Activated CD4-positive, alpha-beta memory T cell treated with anti-CD3 and anti-CD28 coated beads for 36 hours (primary cell): ENCODE measurements at regions of chr6 and their contacts with region 1.

Region 1: DNA sequence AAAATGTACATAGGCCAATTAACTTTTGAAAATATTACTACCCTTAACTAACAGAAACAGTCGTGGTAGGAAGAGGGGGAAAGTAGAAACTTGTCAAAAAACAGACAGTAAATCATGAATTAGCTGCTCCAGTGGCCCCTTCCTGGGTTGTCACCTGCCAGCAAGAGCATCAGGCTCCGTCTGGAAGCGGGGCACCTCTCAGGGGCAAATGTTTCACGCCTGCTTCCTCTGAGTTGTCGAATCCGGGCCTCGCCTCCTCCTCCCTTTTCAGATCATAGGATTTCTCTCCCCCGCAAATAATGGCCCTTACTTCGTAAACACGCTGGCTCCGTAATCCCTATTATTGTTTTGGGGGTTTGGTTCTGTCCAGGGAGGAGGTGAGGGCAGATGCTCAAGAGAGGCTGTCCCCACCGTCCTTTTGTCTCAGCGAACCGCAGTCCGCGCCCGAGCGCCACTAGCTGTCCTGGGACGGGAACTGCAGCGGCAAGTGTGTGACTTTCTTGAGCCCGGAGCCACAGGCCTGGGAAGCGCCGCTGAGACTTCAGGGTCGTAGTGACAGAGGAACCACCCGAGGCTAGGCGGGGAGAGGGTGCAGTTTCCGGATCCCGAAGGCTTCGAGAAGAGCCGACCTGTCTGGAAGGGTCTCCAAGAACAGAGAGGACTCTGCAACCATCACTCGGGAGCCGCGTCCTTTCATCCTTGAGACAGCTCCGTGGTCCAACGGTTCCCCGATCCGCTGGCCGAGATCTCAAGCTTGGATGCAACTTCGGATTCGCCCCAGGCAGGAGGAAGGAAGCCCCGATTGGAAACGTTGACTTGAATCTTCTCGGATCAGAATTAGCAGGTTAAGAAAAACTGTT is 214.5 kb upstream of the ZNF184 start:
- DNase-seq: peak; percentile 90
- H3K4me3 Mint-ChIP-seq: peak overlapping the region; percentile 87
- H3K27ac Mint-ChIP-seq: peak overlapping the region; percentile 84
- H3K4me1 Mint-ChIP-seq: peaks cover 14% of the 10 kb centered on the region
- H3K27me3 Mint-ChIP-seq: peaks cover 15% of the 10 kb centered on the region

Region 2: DNA sequence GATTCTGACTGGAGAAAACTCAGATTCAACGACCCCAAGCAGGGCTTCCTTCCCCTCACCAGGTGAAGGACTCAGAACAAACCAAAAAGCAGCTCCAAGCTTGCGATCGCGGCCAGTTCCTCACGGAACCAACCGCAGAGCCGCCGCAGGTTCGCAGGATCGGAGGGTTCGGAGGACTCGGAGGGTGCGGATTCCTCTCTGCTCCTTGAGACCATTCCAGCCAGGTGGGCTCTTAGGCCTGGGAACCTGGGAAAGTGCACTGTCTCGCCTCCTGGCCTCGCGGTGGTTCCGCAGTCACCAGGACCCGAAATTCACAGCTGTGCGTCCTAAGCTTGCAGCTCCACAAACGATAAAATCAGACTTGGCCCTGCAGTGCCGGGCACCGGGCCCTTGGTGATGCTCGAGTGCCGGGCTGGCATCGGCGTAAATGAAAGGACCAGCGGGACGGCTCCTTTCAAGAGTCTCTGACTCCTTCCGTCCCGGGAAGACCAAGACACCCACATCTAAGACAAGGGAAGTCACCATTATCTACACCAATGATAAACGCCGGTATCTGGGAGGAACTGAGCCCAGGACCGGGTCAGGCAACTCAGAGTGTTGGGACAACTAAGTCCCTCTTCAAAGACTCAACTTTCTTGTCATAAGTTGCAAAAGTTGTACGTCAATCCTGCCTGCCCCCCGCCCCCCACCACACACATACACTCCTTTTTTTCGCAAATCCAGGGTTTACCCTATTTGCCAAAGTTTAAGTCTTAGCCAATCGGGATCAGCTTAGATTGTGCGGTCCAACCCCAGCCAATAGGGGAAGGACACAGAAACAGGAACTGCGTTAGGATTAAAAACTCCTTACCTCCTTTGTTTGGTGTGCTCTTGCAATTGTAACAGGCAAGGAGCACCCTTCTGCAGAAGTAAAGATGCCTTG is 509.6 kb before region 1 on chr6:
- CTCF ChIA-PET with region 1: interaction called, 3 read pairs
- POLR2A ChIA-PET with region 1: no interaction called
- intact Hi-C with region 1: loop called (anchors 5 kb)
- DNase-seq: peak; percentile 84
- H3K4me3 Mint-ChIP-seq: peak overlapping the region; percentile 88
- H3K27ac Mint-ChIP-seq: peak overlapping the region; percentile 88
- H3K4me1 Mint-ChIP-seq: peaks cover 10% of the 10 kb centered on the region
- H3K27me3 Mint-ChIP-seq: peaks cover 1% of the 10 kb centered on the region

Region 3: DNA sequence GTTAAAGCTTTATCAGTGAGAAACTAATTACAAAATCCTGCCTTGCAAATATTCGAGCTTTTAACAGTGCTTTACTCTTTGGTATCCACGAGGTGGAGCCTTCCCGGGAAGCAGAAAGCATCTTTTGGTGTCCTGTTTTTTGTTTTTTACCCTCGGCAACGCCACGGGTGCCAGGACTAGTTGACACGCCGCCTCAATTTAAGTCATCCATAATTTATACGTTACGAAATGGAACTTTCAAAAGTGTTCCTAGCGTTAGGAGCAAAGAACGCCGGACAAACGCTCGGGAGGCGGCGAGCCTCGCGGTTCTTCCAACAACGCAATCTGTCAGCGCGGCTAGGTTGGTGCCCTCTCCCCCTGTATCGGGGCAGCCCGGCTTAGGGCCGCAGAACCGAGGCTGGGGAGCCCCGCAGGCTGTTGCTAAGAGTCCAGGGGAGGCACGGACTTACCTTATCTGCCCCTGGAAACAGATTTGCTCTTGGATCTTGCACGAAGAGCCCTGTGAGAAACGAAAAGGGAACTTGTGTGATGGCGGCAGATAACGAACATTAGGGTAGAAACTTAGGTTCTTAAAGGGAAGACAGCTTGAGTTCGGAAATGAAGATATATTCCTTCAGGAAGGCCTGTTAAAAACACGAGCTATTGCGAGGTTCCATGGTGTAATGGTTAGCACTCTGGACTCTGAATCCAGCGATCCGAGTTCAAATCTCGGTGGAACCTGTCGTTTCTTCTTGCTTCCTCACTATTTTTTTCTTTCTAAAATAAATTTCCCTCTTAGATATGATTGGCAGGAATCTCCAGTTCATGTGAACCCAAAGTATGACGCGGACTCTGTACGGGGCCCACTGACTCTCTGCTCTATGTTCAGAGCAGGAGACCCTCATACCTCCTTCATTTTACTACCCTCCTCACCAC is 168.2 kb before region 1 on chr6:
- CTCF ChIA-PET with region 1: interaction called, 4 read pairs
- POLR2A ChIA-PET with region 1: no interaction called
- intact Hi-C with region 1: loop called (anchors 2 kb)
- DNase-seq: peak; percentile 70
- H3K4me3 Mint-ChIP-seq: peak overlapping the region; percentile 79
- H3K27ac Mint-ChIP-seq: peak overlapping the region; percentile 77
- H3K4me1 Mint-ChIP-seq: peaks cover 19% of the 10 kb centered on the region
- H3K27me3 Mint-ChIP-seq: peaks cover 17% of the 10 kb centered on the region

Region 4: DNA sequence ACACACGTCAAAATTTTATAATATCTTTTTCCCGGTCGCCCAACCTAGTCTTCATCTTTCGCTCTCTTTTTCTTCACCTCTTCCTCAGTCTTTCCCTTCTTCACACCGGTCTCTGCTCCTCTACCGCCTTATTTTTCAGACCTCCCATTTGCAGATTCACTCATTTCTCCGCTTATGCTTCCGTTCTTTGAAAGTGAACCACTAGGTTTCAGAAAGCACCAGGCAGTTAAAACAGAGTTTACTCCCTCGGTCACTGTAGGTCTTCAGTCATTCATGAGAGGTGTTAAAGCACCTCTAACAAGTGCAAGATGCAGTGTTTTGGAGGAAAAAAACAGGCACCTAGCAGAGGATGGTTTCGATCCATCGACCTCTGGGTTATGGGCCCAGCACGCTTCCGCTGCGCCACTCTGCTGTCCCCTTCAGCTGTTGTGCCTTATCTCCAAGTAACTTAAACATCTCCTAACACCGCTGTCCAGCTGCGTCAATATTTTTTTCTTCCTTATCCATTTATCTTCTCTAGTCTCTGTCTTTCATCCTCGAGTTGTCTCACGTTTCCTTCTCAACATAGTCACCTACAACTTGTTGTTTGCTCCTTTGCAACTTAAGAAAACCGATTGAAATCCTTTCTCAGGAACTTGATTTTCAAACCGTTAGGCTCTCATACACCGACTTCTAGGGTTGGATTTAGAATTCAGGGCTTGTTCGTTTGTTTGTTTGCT is 94.7 kb before region 1 on chr6:
- CTCF ChIA-PET with region 1: no interaction called
- POLR2A ChIA-PET with region 1: no interaction called
- intact Hi-C with region 1: loop called (anchors 5 kb)
- DNase-seq: peak; percentile 71
- H3K4me3 Mint-ChIP-seq: no peak overlapping the region
- H3K27ac Mint-ChIP-seq: no peak overlapping the region
- H3K4me1 Mint-ChIP-seq: no peaks in the 10 kb centered on the region
- H3K27me3 Mint-ChIP-seq: peaks cover 25% of the 10 kb centered on the region

Region 5: GRCh38 chr6:27604986-27605385 is 82.4 kb before region 1 on chr6:
- CTCF ChIA-PET with region 1: no interaction called
- POLR2A ChIA-PET with region 1: no interaction called
- intact Hi-C with region 1: no loop called
- DNase-seq: no peak
- H3K4me3 Mint-ChIP-seq: no peak overlapping the region
- H3K27ac Mint-ChIP-seq: no peak overlapping the region
- H3K4me1 Mint-ChIP-seq: peaks cover 25% of the 10 kb centered on the region
- H3K27me3 Mint-ChIP-seq: peaks cover 46% of the 10 kb centered on the region

Region 6: DNA sequence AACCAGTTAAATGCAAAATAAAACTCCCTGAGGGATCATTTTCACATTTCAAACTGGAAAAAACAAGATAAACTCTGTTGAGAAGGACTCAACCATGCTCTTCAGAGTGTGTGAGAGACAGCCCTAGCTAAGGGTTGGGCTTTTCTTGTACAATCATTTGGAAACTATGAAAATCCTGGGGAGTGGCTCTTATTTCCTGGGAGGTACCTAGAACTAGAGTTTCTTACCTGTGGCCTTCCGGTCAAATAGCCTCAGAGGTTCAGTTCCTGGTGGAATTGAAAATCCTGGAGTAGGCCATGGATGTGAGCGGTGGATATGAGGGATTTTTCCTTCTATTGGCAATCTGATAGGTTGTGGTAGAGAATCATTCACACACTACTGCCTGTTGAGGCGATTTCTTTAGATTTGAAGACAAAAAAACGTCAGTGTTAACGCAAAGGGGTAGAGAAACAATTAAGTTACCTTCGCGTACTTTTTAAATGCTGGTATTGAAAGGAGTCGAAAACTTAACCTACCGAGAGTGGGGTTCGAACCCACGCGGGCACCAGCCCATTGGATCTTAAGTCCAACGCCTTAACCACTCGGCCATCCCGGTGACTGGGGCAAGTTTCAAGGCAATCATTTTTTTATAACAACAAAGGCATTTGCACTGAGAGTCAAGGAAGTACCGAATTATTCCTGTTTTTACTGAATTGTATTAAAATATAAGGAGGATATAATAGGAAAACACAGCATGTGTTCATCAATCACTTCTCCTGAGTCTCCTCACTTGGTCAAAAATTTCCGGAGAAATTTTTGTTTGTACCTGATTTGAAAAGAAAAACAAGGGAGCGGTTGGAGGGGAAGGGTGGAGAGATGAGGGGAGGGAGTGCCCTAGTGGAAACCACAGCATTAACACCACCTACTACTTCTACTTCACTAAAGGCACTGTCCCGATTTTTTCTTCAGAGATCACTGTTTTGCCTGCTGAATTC is 33.5 kb after region 1 on chr6:
- CTCF ChIA-PET with region 1: no interaction called
- POLR2A ChIA-PET with region 1: no interaction called
- intact Hi-C with region 1: loop called (anchors 2 kb)
- DNase-seq: peak; percentile 33
- H3K4me3 Mint-ChIP-seq: no peak overlapping the region
- H3K27ac Mint-ChIP-seq: no peak overlapping the region
- H3K4me1 Mint-ChIP-seq: peaks cover 17% of the 10 kb centered on the region
- H3K27me3 Mint-ChIP-seq: peaks cover 31% of the 10 kb centered on the region